OCI-LY7 (cell line): ENCODE measurements at regions of chr15 and their contacts with region 1.

Region 1: GRCh38 chr15:78842519-78842918 is 30.2 kb upstream of the MORF4L1 start:
- DNase-seq: peak; percentile 52
- H3K4me3 ChIP-seq: no peak overlapping the region
- H3K27ac ChIP-seq: peak overlapping the region; percentile 62
- H3K4me1 ChIP-seq: peaks cover 57% of the 10 kb centered on the region
- CTCF ChIP-seq: no peak

Region 2: GRCh38 chr15:78872972-78873792 is 30.7 kb after region 1 on chr15:
- CTCF ChIA-PET with region 1: no interaction called
- POLR2A ChIA-PET with region 1: no interaction called
- intact Hi-C with region 1: loop called (anchors 2 kb)
- DNase-seq: peak; percentile 96
- H3K4me3 ChIP-seq: peak overlapping the region; percentile 88
- H3K27ac ChIP-seq: peak overlapping the region; percentile 87
- H3K4me1 ChIP-seq: peaks cover 30% of the 10 kb centered on the region
- CTCF ChIP-seq: peak; percentile 77